ENCODE measurements at regions of chr2 and their contacts with region 1.

Region 1: DNA sequence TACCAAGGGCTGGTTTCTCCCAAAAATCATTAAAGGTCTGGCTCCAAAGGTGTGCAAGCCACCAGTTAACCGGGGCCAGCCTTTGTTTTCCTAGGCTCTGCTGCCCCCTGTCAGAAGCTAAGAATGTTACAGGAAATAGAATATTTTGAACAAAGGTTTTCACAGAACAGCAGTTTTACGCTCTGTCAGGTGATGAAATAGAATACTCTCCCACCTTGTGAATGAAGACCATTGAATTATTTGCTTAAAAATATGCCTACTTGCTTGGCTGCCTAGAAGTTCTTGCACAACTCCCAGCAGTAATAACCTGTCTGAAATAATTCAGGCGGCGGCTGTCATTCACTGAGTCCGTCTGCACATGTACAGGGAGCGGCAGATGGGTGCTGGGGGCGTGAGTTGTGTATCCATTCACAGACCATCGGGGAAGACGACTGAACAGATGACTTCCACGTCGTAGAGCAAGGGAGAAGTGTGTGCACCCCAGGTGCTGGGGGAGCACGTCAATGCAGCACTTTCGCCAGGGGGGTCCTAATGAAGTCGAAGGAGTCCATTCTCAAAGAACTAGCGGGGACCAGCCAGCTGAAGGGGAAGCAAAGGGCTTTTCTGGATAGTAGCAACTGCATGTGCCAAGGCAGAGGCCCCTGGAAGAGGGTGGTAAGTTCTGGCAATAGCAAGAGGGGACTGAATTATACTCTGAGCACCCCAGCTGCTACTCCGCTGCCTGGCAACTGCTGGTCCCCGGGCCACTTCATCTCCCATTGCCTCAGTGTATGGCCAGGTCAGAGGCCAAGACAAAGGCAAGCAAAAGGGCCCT is 56.1 kb downstream of the SF3B1 start:
- DNase-seq: peak; percentile 78
- H3K4me3 Mint-ChIP-seq: peak overlapping the region; percentile 22
- H3K27ac Mint-ChIP-seq: no peak overlapping the region
- H3K4me1 Mint-ChIP-seq: peaks cover 15% of the 10 kb centered on the region
- H3K27me3 Mint-ChIP-seq: peaks cover 5% of the 10 kb centered on the region

Region 2: DNA sequence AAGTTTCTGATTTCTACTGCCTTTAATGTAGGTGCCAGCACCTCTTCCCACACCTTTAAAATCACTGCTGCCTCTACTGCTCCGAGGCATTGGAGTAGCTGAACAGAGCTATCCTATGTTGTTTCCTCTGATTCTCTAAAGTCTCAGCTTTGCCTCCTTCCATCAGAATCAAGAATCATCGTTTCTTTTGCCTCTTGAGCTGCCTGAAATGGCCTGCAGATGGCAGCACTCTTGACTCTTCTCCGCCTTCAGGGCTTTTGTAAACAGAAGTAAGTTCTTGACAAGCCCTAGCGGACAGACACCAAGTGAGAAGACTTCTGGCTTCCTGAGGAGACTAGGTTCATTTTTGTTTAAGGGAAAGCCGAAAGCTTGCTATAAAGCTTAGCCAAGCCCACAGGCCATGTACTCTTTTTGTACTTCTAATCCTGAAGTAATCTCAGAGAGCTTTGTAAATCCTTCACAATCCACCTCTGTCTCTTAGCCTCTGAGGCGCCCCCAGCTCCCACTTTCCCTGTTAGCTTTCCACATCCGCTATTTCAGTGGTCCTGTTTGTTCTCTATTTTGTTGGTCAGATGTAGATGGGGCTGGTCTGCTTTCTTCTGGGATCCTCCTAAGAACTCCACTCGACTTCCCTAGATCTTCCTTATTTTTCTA is 627.6 kb before region 1 on chr2:
- CTCF ChIA-PET with region 1: interaction called, 3 read pairs
- intact Hi-C with region 1: loop called (anchors 1 kb)
- DNase-seq: peak; percentile 83
- H3K4me3 Mint-ChIP-seq: no peak overlapping the region
- H3K27ac Mint-ChIP-seq: no peak overlapping the region
- H3K4me1 Mint-ChIP-seq: peaks cover 9% of the 10 kb centered on the region
- H3K27me3 Mint-ChIP-seq: no peaks in the 10 kb centered on the region

Region 3: GRCh38 chr2:197011799-197012641 is 366.7 kb before region 1 on chr2:
- CTCF ChIA-PET with region 1: interaction called, 4 read pairs
- intact Hi-C with region 1: loop called (anchors 1 kb)
- DNase-seq: peak; percentile 42
- H3K4me3 Mint-ChIP-seq: no peak overlapping the region
- H3K27ac Mint-ChIP-seq: peak overlapping the region; percentile 81
- H3K4me1 Mint-ChIP-seq: peaks cover 2% of the 10 kb centered on the region
- H3K27me3 Mint-ChIP-seq: no peaks in the 10 kb centered on the region

Region 4: GRCh38 chr2:197168705-197169104 is 210.0 kb before region 1 on chr2:
- CTCF ChIA-PET with region 1: interaction called, 3 read pairs
- intact Hi-C with region 1: loop called (anchors 1 kb)
- DNase-seq: peak; percentile 90
- H3K4me3 Mint-ChIP-seq: no peak overlapping the region
- H3K27ac Mint-ChIP-seq: peak overlapping the region; percentile 73
- H3K4me1 Mint-ChIP-seq: peaks cover 60% of the 10 kb centered on the region
- H3K27me3 Mint-ChIP-seq: no peaks in the 10 kb centered on the region

Region 5: GRCh38 chr2:197239434-197239833 is 139.3 kb before region 1 on chr2:
- CTCF ChIA-PET with region 1: no interaction called
- intact Hi-C with region 1: loop called (anchors 5 kb)
- DNase-seq: no peak
- H3K4me3 Mint-ChIP-seq: peak overlapping the region; percentile 78
- H3K27ac Mint-ChIP-seq: peak overlapping the region; percentile 91
- H3K4me1 Mint-ChIP-seq: peaks cover 85% of the 10 kb centered on the region
- H3K27me3 Mint-ChIP-seq: no peaks in the 10 kb centered on the region

Region 6: DNA sequence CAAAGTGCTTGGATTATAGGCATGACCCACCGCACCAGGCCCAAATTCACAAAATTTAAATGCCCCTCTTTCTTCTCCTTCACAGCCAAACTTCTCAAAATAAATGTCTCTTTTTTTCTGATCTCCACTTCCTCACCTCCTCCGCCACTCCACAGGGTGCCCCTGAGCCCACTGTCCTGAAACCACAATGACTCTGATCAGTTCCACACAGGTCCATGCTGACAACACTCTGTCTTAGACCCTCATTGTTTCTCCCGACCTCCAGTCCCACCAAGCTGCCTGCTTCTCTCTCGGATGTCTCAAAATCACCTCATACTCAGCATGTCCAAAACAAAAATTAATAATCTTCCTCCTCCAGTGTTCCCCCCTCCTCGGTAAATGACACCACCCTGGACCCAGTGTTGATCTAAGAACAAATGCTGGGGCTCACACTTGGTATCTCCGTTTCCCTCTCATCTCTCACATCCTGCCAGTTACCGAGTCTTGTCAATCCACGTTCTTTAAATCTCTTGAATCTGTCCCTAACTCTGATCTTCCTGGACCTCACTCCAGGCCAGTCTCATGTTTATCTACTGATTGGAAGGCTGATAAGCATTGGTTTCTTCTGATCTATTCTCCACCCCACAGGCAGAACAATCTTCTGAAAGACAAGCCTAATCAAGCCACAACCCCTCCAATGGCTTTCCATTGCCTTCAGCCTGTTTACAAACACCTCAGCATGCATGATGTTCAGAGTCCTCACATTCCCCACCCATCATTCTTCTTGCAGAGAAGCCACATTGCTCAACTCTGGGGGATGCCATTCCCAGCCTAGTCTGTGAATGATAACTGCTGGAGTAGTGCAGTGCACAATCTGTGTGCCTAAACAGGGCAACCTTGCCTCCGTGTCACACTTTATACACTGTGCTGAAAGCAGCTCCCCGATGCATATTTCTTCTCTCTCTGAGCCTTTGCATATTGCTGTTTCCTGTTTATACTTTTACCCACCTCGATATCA is 55.7 kb before region 1 on chr2:
- CTCF ChIA-PET with region 1: no interaction called
- intact Hi-C with region 1: loop called (anchors 2 kb)
- DNase-seq: peak; percentile 41
- H3K4me3 Mint-ChIP-seq: peak overlapping the region; percentile 62
- H3K27ac Mint-ChIP-seq: peak overlapping the region; percentile 88
- H3K4me1 Mint-ChIP-seq: peaks cover 73% of the 10 kb centered on the region
- H3K27me3 Mint-ChIP-seq: no peaks in the 10 kb centered on the region

Region 7: GRCh38 chr2:197356136-197356535 is 22.6 kb before region 1 on chr2:
- CTCF ChIA-PET with region 1: no interaction called
- intact Hi-C with region 1: no loop called
- DNase-seq: no peak
- H3K4me3 Mint-ChIP-seq: peak overlapping the region; percentile 17
- H3K27ac Mint-ChIP-seq: no peak overlapping the region
- H3K4me1 Mint-ChIP-seq: peaks cover 28% of the 10 kb centered on the region
- H3K27me3 Mint-ChIP-seq: no peaks in the 10 kb centered on the region